Activated CD8-positive, alpha-beta T cell treated with anti-CD3 and anti-CD28 coated beads for 36 hours (primary cell): ENCODE measurements at regions of chr19 and their contacts with region 1.

Region 1: DNA sequence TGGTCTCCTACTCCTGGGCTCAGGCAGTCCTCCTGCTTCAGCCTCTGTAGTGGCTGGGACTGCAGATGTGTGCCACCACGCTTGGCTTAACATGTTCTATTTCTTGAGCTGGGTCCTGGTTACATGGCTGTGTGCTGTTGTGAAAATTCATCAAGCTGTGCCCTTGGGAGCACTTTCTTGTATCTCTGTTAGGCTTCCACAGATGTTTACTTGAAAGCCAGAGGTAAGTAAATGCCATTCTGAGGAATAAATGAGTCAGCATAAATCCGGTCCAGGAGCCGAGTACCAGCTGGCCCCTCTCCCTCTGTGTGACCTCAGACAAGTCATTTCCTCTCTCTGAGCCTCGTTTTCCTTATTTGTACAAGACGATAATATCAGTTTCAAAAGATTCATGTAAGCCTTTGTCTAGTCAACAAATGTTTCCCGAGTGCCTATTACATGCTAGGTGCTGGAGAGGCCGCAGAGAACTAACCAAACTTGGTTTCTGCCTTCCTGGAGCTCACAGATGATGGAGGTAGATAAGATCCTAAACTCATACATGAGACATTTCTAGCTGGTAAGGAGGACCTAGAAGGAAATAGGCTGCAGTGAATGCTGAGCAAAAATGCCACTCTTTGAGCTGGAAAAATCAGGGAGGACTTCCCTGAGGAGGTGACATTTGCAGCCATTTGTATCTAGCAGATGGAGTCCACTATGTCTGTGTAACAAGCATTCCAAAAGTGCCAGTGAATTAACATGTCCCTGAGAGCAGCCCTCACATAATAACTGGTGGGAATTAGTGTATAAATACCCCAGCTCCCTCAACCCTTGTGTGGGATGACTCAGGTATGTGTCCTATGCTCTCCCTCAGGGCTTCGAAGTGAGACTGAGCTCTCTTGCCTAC is 2.7 kb upstream of the RASAL3 start:
- DNase-seq: peak; percentile 83
- ATAC-seq: peak; percentile 43
- H3K4me3 Mint-ChIP-seq: peak overlapping the region; percentile 45
- H3K27ac Mint-ChIP-seq: peak overlapping the region; percentile 96
- H3K4me1 Mint-ChIP-seq: peaks cover 52% of the 10 kb centered on the region
- H3K27me3 Mint-ChIP-seq: no peaks in the 10 kb centered on the region
- CTCF ChIP-seq: no peak

Region 2: GRCh38 chr19:15372470-15372869 is 94.6 kb before region 1 on chr19:
- CTCF ChIA-PET with region 1: no interaction called
- POLR2A ChIA-PET with region 1: no interaction called
- intact Hi-C with region 1: no loop called
- DNase-seq: peak; percentile 24
- ATAC-seq: no peak
- H3K4me3 Mint-ChIP-seq: no peak overlapping the region
- H3K27ac Mint-ChIP-seq: no peak overlapping the region
- H3K4me1 Mint-ChIP-seq: peaks cover 22% of the 10 kb centered on the region
- H3K27me3 Mint-ChIP-seq: no peaks in the 10 kb centered on the region
- CTCF ChIP-seq: no peak

Region 3: GRCh38 chr19:15449620-15450527 is 17.2 kb before region 1 on chr19 and contains the start of gene WIZ:
- CTCF ChIA-PET with region 1: interaction called, 6 read pairs
- POLR2A ChIA-PET with region 1: interaction called, 33 read pairs
- intact Hi-C with region 1: no loop called
- DNase-seq: peak; percentile 86
- ATAC-seq: peak; percentile 74
- H3K4me3 Mint-ChIP-seq: peak within 1 kb of the TSS; percentile 61
- H3K27ac Mint-ChIP-seq: peak within 1 kb of the TSS; percentile 87
- H3K4me1 Mint-ChIP-seq: peaks cover 14% of the 10 kb centered on the region
- H3K27me3 Mint-ChIP-seq: no peaks in the 10 kb centered on the region
- CTCF ChIP-seq: no peak
- total RNA-seq, gene WIZ: 19.3 to 21.0 TPM